Ovary (tissue), 10 donors: ENCODE measurements at regions of chr12 and their contacts with region 1.

Region 1: GRCh38 chr12:123502163-123502704 is 31.3 kb downstream of the RILPL1 start:
- DNase-seq: no peak
- H3K4me3 ChIP-seq: no peak overlapping the region
- H3K27ac ChIP-seq: no peak overlapping the region
- H3K4me1 ChIP-seq: no peaks in the 10 kb centered on the region
- H3K27me3 ChIP-seq: no peaks in the 10 kb centered on the region
- CTCF ChIP-seq: no peak
- EP300 ChIP-seq: no peak
- POLR2A ChIP-seq: no peak

Region 2: GRCh38 chr12:123801573-123802178 is 299.4 kb after region 1 on chr12:
- intact Hi-C with region 1: no loop called
- DNase-seq: no peak
- H3K4me3 ChIP-seq: no peak overlapping the region
- H3K27ac ChIP-seq: no peak overlapping the region
- H3K4me1 ChIP-seq: no peaks in the 10 kb centered on the region
- H3K27me3 ChIP-seq: no peaks in the 10 kb centered on the region
- CTCF ChIP-seq: no peak
- EP300 ChIP-seq: no peak
- POLR2A ChIP-seq: no peak

Region 3: DNA sequence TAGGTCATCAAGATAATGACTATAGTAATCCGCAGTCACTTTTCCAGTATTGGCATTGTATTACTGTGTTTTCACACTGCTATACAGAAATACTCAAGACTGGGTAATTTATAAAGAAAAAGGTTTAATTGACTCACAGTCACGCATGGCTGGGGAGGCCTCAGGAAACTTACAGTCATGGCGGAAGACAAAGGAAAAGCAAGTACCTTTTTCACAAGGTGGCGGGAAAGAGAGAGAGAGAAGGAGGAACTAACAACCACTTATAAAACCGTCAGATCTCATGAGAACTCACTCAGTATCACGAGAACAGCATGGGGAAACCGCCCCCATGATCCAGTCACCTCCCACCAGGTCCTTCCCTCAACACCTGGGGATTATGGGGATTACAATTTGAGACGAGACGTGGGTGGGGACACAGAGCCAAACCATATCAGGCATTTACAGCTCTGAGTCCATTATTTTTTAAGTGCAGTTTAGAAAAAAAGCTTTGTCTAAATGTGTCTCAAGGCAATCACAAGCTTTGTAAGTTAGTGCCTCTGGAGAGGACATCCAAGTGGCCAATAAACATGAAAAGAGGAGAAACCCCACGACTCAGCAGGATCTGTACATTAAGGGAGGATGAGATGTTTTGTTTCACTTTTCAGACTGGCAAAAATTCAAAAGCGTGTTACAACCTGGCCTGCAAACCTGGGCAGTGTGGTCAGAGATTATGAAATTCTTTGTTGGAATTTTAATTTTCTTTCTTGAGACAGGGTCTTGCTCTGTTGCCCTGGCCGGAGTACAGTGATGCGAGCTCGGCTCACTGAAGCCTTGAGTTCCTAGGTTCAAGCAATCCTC is 341.9 kb after region 1 on chr12:
- intact Hi-C with region 1: loop called in 1 of 4 experiments (anchors 5 kb)
- DNase-seq: no peak
- H3K4me3 ChIP-seq: no peak overlapping the region
- H3K27ac ChIP-seq: no peak overlapping the region
- H3K4me1 ChIP-seq: no peaks in the 10 kb centered on the region
- H3K27me3 ChIP-seq: no peaks in the 10 kb centered on the region
- CTCF ChIP-seq: no peak
- EP300 ChIP-seq: no peak
- POLR2A ChIP-seq: no peak